MCF 10A (cell line): ENCODE measurements at regions of chr6 and their contacts with region 1.

Region 1: DNA sequence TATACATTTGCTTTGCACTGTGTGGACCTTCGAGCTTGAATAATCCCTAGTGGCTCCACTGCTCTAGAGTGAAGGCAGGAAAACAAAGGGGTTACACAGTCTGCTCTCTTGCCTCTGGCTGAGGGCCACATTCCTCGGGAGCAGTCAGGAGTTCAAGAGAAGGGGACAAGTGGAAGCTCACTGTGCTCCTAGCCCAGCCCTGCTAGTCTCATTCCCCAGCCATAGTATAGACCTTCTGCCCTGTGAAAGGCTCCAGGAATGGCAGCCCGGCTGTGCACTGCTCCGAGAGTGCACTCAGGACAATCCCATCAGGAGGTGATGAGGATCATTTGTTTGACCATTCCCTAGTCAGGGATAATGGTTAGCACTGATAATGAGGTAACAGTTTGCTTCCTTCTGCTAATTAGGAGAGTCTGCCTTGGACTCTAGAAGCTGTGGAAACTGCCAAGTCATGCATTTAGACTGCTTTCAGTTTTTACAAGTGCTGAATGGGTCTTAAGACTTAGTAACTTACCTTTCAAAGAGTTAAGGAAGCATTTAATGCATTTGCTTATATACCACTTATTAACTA is 8.5 kb downstream of the IYD start:
- DNase-seq: no peak
- H3K4me3 Mint-ChIP-seq: no peak overlapping the region
- H3K27ac Mint-ChIP-seq: no peak overlapping the region
- H3K4me1 Mint-ChIP-seq: no peaks in the 10 kb centered on the region
- H3K27me3 Mint-ChIP-seq: peaks cover 31% of the 10 kb centered on the region
- CTCF ChIP-seq: no peak

Region 2: DNA sequence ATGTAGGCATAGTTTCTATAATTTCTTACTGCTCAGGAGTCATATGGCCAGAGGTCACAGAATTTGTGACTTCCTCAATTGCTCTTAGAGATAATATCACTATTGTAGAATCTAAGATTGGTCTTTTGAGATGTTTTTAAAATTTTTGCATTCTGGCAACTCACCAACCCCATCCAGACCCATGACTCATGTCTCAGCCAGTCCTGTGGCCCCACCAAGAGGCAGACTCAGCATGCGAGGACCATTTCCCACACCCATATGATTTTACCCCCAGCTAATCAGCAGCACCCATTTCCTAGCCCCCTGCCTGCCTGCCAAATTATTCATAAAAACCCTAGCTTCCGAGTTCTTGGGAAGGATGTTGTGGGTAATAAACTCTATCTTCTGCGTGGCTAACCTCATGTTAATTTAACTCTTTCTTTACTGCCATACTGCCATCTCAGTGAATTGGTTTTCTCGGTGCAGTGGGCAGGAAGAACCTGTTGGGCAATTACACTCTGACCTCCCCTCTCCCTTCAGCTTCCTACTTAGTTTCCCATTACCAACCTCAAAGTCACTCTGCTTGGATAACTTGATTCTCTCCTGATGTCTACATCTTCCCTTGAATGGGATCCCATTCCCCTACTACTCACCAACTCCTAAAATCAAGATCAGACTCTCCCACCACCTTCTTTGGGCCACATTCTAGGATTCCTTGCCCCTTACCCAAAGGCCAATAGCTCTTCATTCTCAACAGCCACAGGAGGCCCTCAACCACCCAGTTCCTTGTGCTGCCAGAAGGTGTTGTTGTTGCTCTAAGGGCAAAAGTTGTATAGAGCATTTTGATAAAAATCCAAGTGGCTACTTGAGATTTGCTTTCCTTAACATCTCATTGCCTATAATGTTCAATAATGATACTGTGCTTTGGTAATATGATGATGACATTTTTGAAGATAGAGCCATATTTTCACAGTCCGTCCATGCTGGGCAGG is 24.7 kb before region 1 on chr6:
- CTCF ChIA-PET with region 1: no interaction called
- POLR2A ChIA-PET with region 1: no interaction called
- intact Hi-C with region 1: loop called (anchors 1 kb)
- DNase-seq: peak; percentile 29
- H3K4me3 Mint-ChIP-seq: no peak overlapping the region
- H3K27ac Mint-ChIP-seq: no peak overlapping the region
- H3K4me1 Mint-ChIP-seq: peaks cover 8% of the 10 kb centered on the region
- H3K27me3 Mint-ChIP-seq: no peaks in the 10 kb centered on the region
- CTCF ChIP-seq: no peak